ENCODE measurements at regions of chr3 and their contacts with region 1.

Region 1: GRCh38 chr3:64224826-64225610 is at the start of gene PRICKLE2:
- DNase-seq: peak; percentile 32 to 91 (median 88)
- H3K4me3 ChIP-seq: peak within 1 kb of the TSS; percentile 41 to 76 (median 60)
- H3K27ac ChIP-seq: peak within 1 kb of the TSS; percentile 41 to 94 (median 85)
- H3K27me3 ChIP-seq: no peaks in the 10 kb centered on the region
- CTCF ChIP-seq: peak in 53 of 56 donors; percentile 17 to 66 (median 46)
- total RNA-seq, gene PRICKLE2: 36.7 to 110 (median 81.6) TPM

Region 2: DNA sequence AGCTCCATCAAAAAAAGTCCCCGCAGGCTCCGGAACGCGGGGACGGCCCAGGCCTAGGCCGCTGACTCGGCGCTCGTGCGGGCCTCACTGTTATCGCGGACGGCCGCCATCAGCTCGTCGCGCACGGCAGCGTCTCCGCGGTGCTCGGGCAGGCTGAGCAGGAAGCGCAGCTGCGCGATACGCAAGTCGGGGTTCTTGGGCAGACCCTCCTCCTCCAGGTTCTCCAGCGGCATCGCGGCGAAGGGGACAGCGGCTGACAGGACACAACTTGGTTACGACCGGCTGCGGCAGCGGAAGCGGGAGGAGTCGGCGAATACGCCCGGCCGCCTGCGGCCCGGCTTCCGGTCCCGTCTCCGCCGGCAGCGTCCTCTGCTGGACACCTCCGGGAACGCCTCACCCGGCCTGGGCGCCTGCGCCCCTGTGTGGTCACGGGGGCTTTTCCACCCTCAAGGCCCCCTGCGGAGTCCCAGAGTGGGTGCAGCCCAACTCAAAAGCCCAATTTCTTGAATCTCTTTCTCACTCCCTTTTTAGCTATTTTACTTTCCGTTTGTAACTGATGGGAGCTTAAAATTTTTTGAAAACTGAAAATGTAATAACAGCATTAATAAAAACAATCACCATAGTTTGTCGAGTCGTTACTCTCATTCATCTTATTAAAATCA is 201.7 kb before region 1 on chr3 and contains the start of gene PSMD6:
- intact Hi-C with region 1: loop called in 1 of 2 experiments (anchors 10 kb)
- DNase-seq: peak; percentile 72 to 91 (median 84)
- H3K4me3 ChIP-seq: peak within 1 kb of the TSS; percentile 75 to 99 (median 94)
- H3K27ac ChIP-seq: peak within 1 kb of the TSS in 56 of 59 donors; percentile 33 to 95 (median 80)
- H3K27me3 ChIP-seq: no peaks in the 10 kb centered on the region
- CTCF ChIP-seq: peak in 55 of 56 donors; percentile 98 to 100 (median 100)
- total RNA-seq, gene PSMD6: 44.2 to 84.4 (median 65.1) TPM

Region 3: GRCh38 chr3:64030741-64031140 is 194.3 kb before region 1 on chr3:
- intact Hi-C with region 1: loop called (anchors 2 to 10 kb)
- DNase-seq: peak; percentile 53 to 84 (median 67)
- H3K4me3 ChIP-seq: peak overlapping the region in 58 of 59 donors; percentile 13 to 71 (median 52)
- H3K27ac ChIP-seq: peak overlapping the region in 2 of 59 donors; percentile 10 to 31
- H3K27me3 ChIP-seq: peaks cover 0 to 10% (median 0%) of the 10 kb centered on the region in 45 donors
- CTCF ChIP-seq: peak; percentile 84 to 99 (median 92)

Region 4: GRCh38 chr3:64163755-64164148 is 61.3 kb before region 1 on chr3:
- intact Hi-C with region 1: no loop called
- DNase-seq: no peak
- H3K4me3 ChIP-seq: peak overlapping the region in 1 of 59 donors; percentile 1
- H3K27ac ChIP-seq: peak overlapping the region in 7 of 59 donors; percentile 7 to 45 (median 23)
- H3K27me3 ChIP-seq: no peaks in the 10 kb centered on the region
- CTCF ChIP-seq: no peak

Region 5: DNA sequence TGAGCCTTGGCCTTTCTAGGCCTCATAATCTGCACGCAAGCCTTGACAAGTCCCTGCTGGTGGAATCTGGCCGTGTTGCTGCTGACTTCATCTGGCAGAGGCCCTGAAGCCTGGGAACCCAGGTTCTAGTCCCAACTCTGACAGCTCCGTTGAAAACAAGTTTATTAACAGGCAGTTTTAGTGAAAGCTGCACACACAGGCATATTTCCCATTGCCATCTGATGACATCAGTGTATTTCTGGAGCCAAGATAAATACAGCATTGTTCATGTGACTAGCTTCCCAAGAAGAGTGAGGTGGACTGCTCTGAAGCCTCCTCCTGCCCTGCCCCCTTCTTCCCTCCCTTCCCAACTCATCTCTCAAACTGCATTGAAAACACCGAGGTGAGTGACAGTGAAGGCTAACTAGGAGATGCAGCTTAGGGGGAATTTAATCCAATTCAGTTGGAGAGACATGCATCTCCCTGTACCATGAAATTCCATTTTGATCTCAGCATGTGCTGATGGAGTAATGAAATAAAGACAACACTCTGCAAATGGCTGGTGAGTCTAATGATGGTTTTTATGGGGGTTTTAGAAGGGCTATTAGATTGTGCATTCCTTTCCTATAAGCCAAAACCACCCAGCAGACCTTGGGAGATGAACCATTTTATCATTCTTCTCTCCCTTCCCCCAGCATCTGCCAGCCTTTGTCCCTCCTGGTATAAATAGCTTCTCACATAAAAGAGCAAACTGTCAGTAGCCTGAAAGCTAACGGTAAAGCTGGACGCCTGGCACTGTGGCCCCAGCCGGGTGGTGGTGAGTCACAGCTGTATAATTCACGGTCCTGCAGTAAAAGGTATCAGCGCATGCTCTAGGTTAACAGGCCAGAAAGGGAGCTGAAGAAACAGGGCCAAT is 37.7 kb before region 1 on chr3:
- intact Hi-C with region 1: loop called in 1 of 2 experiments (anchors 2 kb)
- DNase-seq: peak in 8 of 10 donors; percentile 32 to 84 (median 54)
- H3K4me3 ChIP-seq: peak overlapping the region in 20 of 59 donors; percentile 2 to 41 (median 20)
- H3K27ac ChIP-seq: peak overlapping the region in 56 of 59 donors; percentile 3 to 88 (median 74)
- H3K27me3 ChIP-seq: no peaks in the 10 kb centered on the region
- CTCF ChIP-seq: no peak

Region 6: DNA sequence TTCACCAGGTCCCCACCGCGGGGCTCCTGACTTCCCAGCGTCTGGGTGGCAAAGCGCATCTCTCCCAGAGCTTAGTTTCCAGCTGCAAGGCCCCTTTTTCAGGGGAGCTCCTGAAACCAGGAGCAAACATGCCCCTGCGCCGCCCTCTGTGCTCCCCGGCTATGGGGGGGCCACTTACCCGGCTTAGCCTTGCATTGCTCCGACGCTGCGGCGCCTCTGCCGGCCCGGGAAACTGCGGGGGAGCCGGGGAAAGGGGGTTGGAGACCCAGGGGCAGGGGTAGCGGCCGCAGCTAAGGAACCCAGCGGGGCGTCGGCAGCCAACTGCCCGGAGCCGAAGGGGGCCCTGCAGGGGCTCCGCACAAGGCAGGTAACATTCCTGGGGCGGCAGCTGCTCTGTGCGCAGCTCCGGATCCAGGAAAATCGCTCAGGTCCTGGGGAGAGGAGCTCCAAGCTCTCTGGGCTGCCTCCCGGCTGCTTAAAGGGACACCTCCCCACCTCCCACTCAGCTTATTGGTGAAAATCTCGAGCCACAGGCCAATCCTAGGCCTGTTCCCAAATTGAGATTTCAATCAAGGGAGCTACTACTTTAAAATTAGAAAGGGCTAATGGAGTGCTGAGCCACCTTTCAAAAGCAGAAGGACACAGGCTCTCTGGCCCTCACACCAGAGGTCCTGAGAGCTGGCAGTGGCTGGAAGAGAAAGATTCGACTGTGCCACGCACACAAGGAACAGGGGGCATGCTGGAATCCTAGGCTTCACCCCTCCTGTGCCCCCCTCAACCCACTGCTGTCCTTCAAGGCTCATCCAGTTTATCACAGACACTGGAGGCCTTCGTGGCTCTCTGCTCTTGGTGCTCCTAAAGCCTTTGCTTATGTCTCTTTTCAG is 42.9 kb after region 1 on chr3:
- intact Hi-C with region 1: no loop called
- DNase-seq: peak; percentile 12 to 81 (median 70)
- H3K4me3 ChIP-seq: peak overlapping the region; percentile 45 to 85 (median 70)
- H3K27ac ChIP-seq: peak overlapping the region in 58 of 59 donors; percentile 35 to 95 (median 82)
- H3K27me3 ChIP-seq: peaks cover 0 to 16% (median 0%) of the 10 kb centered on the region in 45 donors
- CTCF ChIP-seq: no peak

Region 7: GRCh38 chr3:64405211-64405835 is 180.3 kb after region 1 on chr3:
- intact Hi-C with region 1: loop called in 1 of 2 experiments (anchors 10 kb)
- DNase-seq: no peak
- H3K4me3 ChIP-seq: no peak overlapping the region
- H3K27ac ChIP-seq: peak overlapping the region in 7 of 59 donors; percentile 4 to 44 (median 21)
- H3K27me3 ChIP-seq: peaks cover 0 to 2% (median 0%) of the 10 kb centered on the region in 45 donors
- CTCF ChIP-seq: no peak

Region 8: GRCh38 chr3:64462203-64462602 is 237.2 kb after region 1 on chr3:
- intact Hi-C with region 1: loop called (anchors 5 to 10 kb)
- DNase-seq: no peak
- H3K4me3 ChIP-seq: no peak overlapping the region
- H3K27ac ChIP-seq: no peak overlapping the region
- H3K27me3 ChIP-seq: peaks cover 0 to 9% (median 0%) of the 10 kb centered on the region in 45 donors
- CTCF ChIP-seq: no peak

Region 9: DNA sequence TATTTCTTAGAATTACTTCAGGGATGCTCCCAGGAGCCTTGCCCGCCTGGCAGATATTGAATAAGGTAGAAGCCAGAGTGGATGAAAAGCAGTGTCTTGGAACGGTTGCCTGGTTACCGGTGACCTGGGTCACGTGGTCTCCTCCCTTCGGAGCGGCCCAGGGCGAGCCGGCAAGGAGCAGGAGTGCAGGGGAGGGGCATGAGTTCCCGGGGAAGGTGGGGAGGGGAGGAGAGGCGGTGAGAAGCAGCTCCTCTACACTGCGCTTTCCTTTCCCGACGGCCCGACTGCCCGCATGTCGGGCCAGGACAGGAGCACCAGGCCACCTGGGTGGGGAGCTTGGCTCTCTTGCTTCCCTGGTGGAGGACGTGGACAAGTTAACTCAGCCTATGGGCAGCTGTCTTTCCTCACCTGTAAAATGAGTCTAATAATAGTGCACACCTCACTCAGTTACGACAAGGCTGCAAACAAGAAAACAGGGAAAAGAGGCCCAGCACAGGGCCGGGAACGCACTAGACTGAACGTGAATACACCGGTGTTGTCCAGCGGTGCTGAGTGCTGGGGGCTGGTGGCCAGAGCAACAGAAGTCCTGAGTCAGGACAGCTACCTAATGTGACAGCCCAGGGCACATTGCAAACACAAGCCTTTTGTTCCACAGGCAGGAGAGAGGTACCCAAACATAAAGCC is 264.5 kb after region 1 on chr3:
- intact Hi-C with region 1: loop called in 1 of 2 experiments (anchors 5 kb)
- DNase-seq: peak in 1 of 10 donors; percentile 48
- H3K4me3 ChIP-seq: peak overlapping the region in 1 of 59 donors; percentile 4
- H3K27ac ChIP-seq: no peak overlapping the region
- H3K27me3 ChIP-seq: peaks cover 0 to 26% (median 0%) of the 10 kb centered on the region in 45 donors
- CTCF ChIP-seq: no peak

Measured in dorsolateral prefrontal cortex (tissue), 120 donors.